ENCODE measurements at regions of chr9 and their contacts with region 1.

Region 1: GRCh38 chr9:93302551-93303257 is 118.8 kb downstream of the WNK2 start:
- DNase-seq: peak; percentile 54 to 81 (median 74)
- H3K4me3 ChIP-seq: no peak overlapping the region
- H3K27ac ChIP-seq: no peak overlapping the region
- H3K4me1 ChIP-seq: no peaks in the 10 kb centered on the region
- H3K27me3 ChIP-seq: no peaks in the 10 kb centered on the region
- CTCF ChIP-seq: peak; percentile 42 to 62 (median 60)
- POLR2A ChIP-seq: no peak

Region 2: DNA sequence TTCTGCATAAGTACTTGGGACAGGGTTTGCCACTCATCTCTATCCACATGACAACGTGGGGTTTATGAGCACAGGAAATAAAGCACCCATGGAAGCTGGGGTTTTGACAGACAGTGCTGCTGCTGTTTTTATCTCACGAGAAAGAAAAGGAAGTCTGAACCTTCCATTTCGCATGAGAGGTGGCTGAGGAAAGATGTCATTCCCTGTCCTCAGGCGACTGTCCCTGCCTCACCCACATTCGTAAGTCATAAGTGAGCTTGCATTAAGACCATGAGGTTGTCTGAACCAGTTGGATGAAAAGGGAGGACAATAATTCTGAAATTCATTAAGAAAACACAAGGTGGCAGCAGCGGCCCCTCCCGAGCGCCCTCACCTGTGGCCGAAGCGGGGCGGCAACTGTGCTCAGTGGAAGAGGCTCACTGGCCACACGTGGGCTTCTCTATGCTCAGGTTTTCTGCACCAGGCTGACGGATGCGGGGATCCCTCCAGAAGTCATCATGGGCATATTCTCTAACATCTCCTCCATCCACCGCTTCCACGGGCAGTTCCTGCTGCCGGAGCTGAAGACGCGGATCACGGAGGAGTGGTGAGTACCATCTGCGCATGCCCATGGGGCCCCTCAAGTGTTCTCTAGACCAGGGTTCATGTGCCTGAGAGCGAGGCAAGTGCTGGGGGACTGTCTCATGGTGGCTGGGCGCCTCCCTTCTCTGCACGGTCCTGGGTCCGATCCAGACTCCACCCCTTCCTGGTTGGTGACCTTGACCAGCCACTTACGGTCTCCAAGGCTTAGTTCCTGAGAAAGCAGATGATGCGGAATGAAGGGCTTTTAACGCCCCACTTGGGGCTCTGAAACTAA is 298.9 kb before region 1 on chr9:
- intact Hi-C with region 1: loop called in 1 of 2 experiments (anchors 10 kb)
- DNase-seq: peak; percentile 45 to 79 (median 68)
- H3K4me3 ChIP-seq: peak overlapping the region in 2 of 4 donors; percentile 4 to 29
- H3K27ac ChIP-seq: no peak overlapping the region
- H3K4me1 ChIP-seq: no peaks in the 10 kb centered on the region
- H3K27me3 ChIP-seq: no peaks in the 10 kb centered on the region
- CTCF ChIP-seq: peak; percentile 65 to 76 (median 70)
- POLR2A ChIP-seq: no peak

Region 3: GRCh38 chr9:93159601-93160471 is 142.9 kb before region 1 on chr9:
- intact Hi-C with region 1: loop called (anchors 5 kb)
- DNase-seq: peak; percentile 77 to 93 (median 87)
- H3K4me3 ChIP-seq: no peak overlapping the region
- H3K27ac ChIP-seq: no peak overlapping the region
- H3K4me1 ChIP-seq: no peaks in the 10 kb centered on the region
- H3K27me3 ChIP-seq: no peaks in the 10 kb centered on the region
- CTCF ChIP-seq: peak; percentile 93 to 98 (median 96)
- POLR2A ChIP-seq: no peak

Region 4: DNA sequence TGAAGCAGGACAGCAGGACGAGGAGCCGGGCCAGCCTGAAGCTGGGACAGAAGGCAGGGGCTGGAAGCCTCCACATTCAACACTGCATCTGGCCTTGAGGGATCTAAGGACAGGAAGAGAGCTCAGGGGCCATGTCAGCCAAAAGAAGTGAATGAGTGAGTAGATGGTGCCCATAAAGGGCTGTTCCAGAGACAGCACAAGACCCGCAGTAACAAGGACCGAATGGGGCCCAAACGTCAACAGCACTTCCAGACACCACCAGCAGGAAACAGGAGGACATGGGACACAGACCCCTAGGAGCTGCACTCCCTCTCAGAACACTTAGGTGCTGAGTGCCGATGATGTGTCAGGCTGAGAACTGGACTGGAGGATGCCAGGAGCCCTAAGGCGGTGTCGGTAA is 34.0 kb after region 1 on chr9:
- intact Hi-C with region 1: no loop called
- DNase-seq: no peak
- H3K4me3 ChIP-seq: no peak overlapping the region
- H3K27ac ChIP-seq: no peak overlapping the region
- H3K4me1 ChIP-seq: no peaks in the 10 kb centered on the region
- H3K27me3 ChIP-seq: no peaks in the 10 kb centered on the region
- CTCF ChIP-seq: no peak
- POLR2A ChIP-seq: no peak

Region 5: GRCh38 chr9:93531374-93531773 is 228.7 kb after region 1 on chr9:
- intact Hi-C with region 1: no loop called
- DNase-seq: peak in 5 of 7 donors; percentile 36 to 66 (median 63)
- H3K4me3 ChIP-seq: no peak overlapping the region
- H3K27ac ChIP-seq: no peak overlapping the region
- H3K4me1 ChIP-seq: peaks cover 0 to 9% of the 10 kb centered on the region in 2 donors
- H3K27me3 ChIP-seq: no peaks in the 10 kb centered on the region
- CTCF ChIP-seq: peak; percentile 15 to 53 (median 37)
- POLR2A ChIP-seq: no peak